Heart left ventricle (tissue), 16 donors: ENCODE measurements at regions of chr19 and their contacts with region 1.

Region 1: DNA sequence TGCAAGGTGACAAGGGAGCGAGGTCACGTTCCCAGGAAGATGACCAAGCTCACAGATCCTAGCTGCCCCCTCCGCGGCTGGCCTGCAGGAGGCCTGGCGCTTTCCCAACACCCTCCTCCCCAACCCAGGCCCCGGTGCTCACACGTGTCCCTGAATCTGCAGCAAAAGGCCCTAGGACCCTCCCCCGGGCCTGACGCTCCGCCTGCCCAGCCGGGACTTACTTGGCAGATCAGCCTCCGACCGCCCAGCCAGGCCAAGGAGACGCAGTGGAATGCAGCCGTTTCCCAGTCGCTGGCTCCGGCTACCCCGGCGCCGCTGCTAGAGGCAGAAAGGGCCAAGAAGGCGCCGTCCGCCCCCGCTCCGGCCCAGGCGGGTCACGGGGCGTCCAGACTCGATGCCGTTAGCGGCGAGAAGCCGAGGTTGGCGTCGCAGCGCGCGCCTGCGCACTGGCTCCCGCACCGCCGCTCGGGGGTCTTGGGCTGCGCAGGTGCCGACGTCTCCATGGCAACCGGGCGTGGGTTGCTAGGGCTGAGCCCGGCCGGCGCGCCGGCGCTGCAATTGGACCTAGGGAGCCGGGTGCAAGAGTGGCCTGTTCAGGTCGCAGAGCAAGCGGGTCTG is at the start of gene PNMA8A:
- DNase-seq: peak; percentile 74 to 90 (median 83)
- ATAC-seq: peak; percentile 66 to 92 (median 85)
- H3K4me3 ChIP-seq: peak within 1 kb of the TSS; percentile 14 to 57 (median 52)
- H3K27ac ChIP-seq: peak within 1 kb of the TSS; percentile 45 to 80 (median 61)
- H3K4me1 ChIP-seq: peaks cover 0 to 22% (median 10%) of the 10 kb centered on the region in 12 donors
- H3K27me3 ChIP-seq: peaks cover 0 to 36% (median 0%) of the 10 kb centered on the region in 9 donors
- CTCF ChIP-seq: peak in 2 of 12 donors; percentile 13 to 16
- POLR2A ChIP-seq: no peak
- total RNA-seq, gene PNMA8A: 2.1 to 12.1 (median 9.3) TPM

Region 2: DNA sequence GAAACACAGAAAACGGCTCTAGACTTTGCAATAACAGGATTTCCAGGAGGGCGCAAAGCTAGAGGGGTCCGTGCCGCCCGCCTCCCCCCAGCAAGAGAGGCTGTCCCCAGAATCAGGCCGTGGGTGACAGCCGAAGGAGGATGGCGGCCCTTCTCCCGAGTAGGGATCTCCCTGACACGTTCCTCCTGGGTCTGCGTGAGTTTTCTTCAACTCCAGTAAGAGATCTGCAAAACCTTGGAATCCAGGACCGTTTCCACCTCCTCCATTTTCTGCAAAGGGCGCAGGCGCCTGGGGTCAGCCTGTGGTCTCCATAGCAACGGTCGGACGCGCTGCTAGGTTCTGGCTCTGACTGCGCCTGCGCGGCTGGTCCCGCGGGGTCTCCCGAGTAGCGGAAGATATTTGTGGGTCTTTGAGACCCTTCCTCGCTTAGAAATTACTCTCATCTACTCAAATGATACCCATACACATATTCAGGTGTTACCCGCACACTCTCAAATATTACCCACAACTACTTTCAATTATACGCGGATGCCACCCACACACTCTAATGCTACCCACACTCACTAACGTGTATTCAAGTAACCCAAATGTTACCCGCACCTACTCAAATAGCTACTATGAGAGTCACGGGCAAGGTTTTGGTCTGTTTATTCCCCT is 44.6 kb before region 1 on chr19:
- intact Hi-C with region 1: loop called in 2 of 10 experiments (anchors 2 to 5 kb)
- DNase-seq: peak in 4 of 5 donors; percentile 79 to 85 (median 84)
- ATAC-seq: peak; percentile 61 to 90 (median 82)
- H3K4me3 ChIP-seq: peak overlapping the region; percentile 26 to 66 (median 52)
- H3K27ac ChIP-seq: peak overlapping the region in 6 of 12 donors; percentile 5 to 67 (median 34)
- H3K4me1 ChIP-seq: peaks cover 0 to 21% (median 9%) of the 10 kb centered on the region in 12 donors
- H3K27me3 ChIP-seq: peaks cover 0 to 44% (median 0%) of the 10 kb centered on the region in 9 donors
- CTCF ChIP-seq: no peak
- POLR2A ChIP-seq: no peak